Panc1 (cell line): ENCODE measurements at regions of chr7 and their contacts with region 1.

Region 1: DNA sequence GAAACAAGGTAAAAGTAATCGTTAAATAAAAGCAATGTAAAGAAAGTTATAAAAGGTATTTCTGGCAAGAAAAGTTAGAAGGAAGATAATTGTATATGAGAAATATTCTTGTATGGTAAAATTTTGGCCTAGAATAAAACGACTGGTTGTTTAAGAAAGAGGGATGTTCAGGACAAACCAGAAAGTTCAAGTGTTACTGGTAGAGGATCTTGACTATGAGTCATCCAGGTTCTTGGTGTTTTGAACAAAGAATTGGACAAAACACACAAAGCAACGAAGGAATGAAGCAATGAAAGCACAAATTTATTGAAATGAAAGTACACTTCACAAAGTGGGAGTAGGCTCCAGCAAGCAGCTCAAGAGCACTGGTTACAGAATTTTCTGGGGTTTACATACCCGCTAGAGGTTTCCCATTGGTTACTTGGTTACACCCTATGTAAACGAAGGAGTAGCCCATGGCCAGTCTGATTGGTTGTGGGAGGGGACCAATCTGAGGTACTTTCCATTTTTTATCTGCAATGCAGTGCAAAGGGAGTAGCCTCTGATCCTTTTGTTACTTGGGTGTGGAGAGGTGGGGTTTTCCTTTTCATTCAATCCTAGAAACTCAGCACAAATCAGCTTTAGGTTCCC is 22.4 kb upstream of the GARS1 start:
- DNase-seq: no peak
- ATAC-seq: no peak
- H3K4me3 ChIP-seq: no peak overlapping the region
- H3K27ac ChIP-seq: no peak overlapping the region
- H3K4me1 ChIP-seq: no peaks in the 10 kb centered on the region
- H3K27me3 ChIP-seq: no peaks in the 10 kb centered on the region
- CTCF ChIP-seq: no peak

Region 2: GRCh38 chr7:30585675-30586074 is 13.3 kb after region 1 on chr7:
- CTCF ChIA-PET with region 1: no interaction called
- POLR2A ChIA-PET with region 1: no interaction called
- in situ Hi-C with region 1: no loop called
- intact Hi-C with region 1: no loop called
- DNase-seq: no peak
- ATAC-seq: no peak
- H3K4me3 ChIP-seq: no peak overlapping the region
- H3K27ac ChIP-seq: no peak overlapping the region
- H3K4me1 ChIP-seq: no peaks in the 10 kb centered on the region
- H3K27me3 ChIP-seq: no peaks in the 10 kb centered on the region
- CTCF ChIP-seq: no peak

Region 3: GRCh38 chr7:30771174-30771879 is 199.0 kb after region 1 on chr7 and contains the start of gene MINDY4:
- CTCF ChIA-PET with region 1: no interaction called
- POLR2A ChIA-PET with region 1: interaction called, 12 read pairs
- in situ Hi-C with region 1: no loop called
- intact Hi-C with region 1: no loop called
- DNase-seq: no peak
- ATAC-seq: peak; percentile 99
- H3K4me3 ChIP-seq: peak within 1 kb of the TSS; percentile 70 to 75
- H3K27ac ChIP-seq: peak within 1 kb of the TSS; percentile 81
- H3K4me1 ChIP-seq: peaks cover 8% of the 10 kb centered on the region
- H3K27me3 ChIP-seq: no peaks in the 10 kb centered on the region; the same call in 1 of the 2 replicates
- CTCF ChIP-seq: no peak
- total RNA-seq, gene MINDY4: 6.2 TPM